PC-9 (cell line): ENCODE measurements at regions of chr16 and their contacts with region 1.

Region 1: GRCh38 chr16:27611340-27611739 is 61.4 kb downstream of the KATNIP start:
- DNase-seq: no peak
- H3K4me3 ChIP-seq: no peak overlapping the region
- H3K27ac ChIP-seq: no peak overlapping the region
- H3K4me1 ChIP-seq: no peaks in the 10 kb centered on the region
- H3K27me3 ChIP-seq: no peaks in the 10 kb centered on the region
- CTCF ChIP-seq: no peak

Region 2: GRCh38 chr16:27549859-27550581 is 61.3 kb before region 1 on chr16 and contains the starts of genes GTF3C1 and KATNIP:
- CTCF ChIA-PET with region 1: no interaction called
- POLR2A ChIA-PET with region 1: no interaction called
- intact Hi-C with region 1: no loop called
- DNase-seq: peak; percentile 95 to 100
- H3K4me3 ChIP-seq: peak within 1 kb of the TSS; percentile 98
- H3K27ac ChIP-seq: 0 out of 2 replicates have a peak within 1 kb of the TSS, but pooled peaks have one; percentile 11
- H3K4me1 ChIP-seq: peaks cover 29% of the 10 kb centered on the region
- H3K27me3 ChIP-seq: no peaks in the 10 kb centered on the region
- CTCF ChIP-seq: no peak
- total RNA-seq, gene GTF3C1: 118 and 142 TPM in 2 replicates
- total RNA-seq, gene KATNIP: 60.9 and 64.8 TPM in 2 replicates

Region 3: GRCh38 chr16:27597356-27597755 is 14.0 kb before region 1 on chr16:
- CTCF ChIA-PET with region 1: interaction called, 13 read pairs
- POLR2A ChIA-PET with region 1: no interaction called
- intact Hi-C with region 1: no loop called
- DNase-seq: no peak
- H3K4me3 ChIP-seq: no peak overlapping the region
- H3K27ac ChIP-seq: no peak overlapping the region
- H3K4me1 ChIP-seq: no peaks in the 10 kb centered on the region
- H3K27me3 ChIP-seq: no peaks in the 10 kb centered on the region
- CTCF ChIP-seq: no peak

Region 4: DNA sequence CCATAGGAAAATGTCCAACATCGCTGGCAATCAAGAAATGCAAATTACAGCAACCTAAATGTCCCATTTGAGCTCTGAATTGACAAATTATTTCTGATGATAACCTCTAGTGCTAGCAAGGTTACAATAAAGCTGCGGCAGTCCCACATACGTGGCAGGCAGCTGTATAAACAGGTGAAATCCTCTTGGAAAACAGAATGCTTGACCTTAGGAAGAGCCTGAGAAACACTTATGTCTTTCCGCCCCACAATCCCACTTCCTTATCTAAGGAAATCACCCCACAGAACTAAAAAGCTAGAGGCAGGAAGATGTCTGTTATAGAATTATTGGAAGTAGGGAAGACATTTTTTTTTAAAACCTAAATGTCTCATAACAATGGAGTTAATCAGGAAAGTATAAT is 92.9 kb after region 1 on chr16:
- CTCF ChIA-PET with region 1: interaction called, 13 read pairs
- POLR2A ChIA-PET with region 1: no interaction called
- intact Hi-C with region 1: no loop called
- DNase-seq: no peak
- H3K4me3 ChIP-seq: no peak overlapping the region
- H3K27ac ChIP-seq: no peak overlapping the region
- H3K4me1 ChIP-seq: no peaks in the 10 kb centered on the region
- H3K27me3 ChIP-seq: no peaks in the 10 kb centered on the region
- CTCF ChIP-seq: no peak